Naive thymus-derived CD4-positive, alpha-beta T cell (primary cell): ENCODE measurements at regions of chr9 and their contacts with region 1.

Region 1: GRCh38 chr9:122350638-122351355 is 20.0 kb upstream of the PTGS1 start:
- DNase-seq: peak; percentile 46 to 84 (median 66)
- ATAC-seq: peak; percentile 88
- H3K4me3 ChIP-seq: no peak overlapping the region
- H3K4me3 Mint-ChIP-seq: peak overlapping the region in 1 of 10 donors; percentile 13
- H3K27ac ChIP-seq: no peak overlapping the region
- H3K27ac Mint-ChIP-seq: no peak overlapping the region
- H3K4me1 ChIP-seq: no peaks in the 10 kb centered on the region
- H3K4me1 Mint-ChIP-seq: peaks cover 7 to 19% (median 14%) of the 10 kb centered on the region in 7 donors
- H3K27me3 ChIP-seq: peaks cover 0 to 3% of the 10 kb centered on the region in 2 donors
- H3K27me3 Mint-ChIP-seq: peaks cover 28 to 39% (median 34%) of the 10 kb centered on the region in 5 donors

Region 2: GRCh38 chr9:122099271-122099869 is 251.4 kb before region 1 on chr9:
- CTCF ChIA-PET with region 1: interaction called, 58 read pairs
- POLR2A ChIA-PET with region 1: interaction called, 3 read pairs
- intact Hi-C with region 1: loop called (anchors 1 kb)
- DNase-seq: peak; percentile 54 to 79 (median 71)
- ATAC-seq: peak; percentile 86
- H3K4me3 ChIP-seq: no peak overlapping the region
- H3K4me3 Mint-ChIP-seq: peak overlapping the region in 7 of 10 donors; percentile 10 to 80 (median 48)
- H3K27ac ChIP-seq: no peak overlapping the region
- H3K27ac Mint-ChIP-seq: no peak overlapping the region
- H3K4me1 ChIP-seq: peaks cover 0 to 11% of the 10 kb centered on the region in 2 donors
- H3K4me1 Mint-ChIP-seq: peaks cover 7 to 19% (median 11%) of the 10 kb centered on the region in 7 donors
- H3K27me3 ChIP-seq: no peaks in the 10 kb centered on the region
- H3K27me3 Mint-ChIP-seq: peaks cover 0 to 29% (median 6%) of the 10 kb centered on the region in 5 donors

Region 3: GRCh38 chr9:122151267-122151828 is 199.4 kb before region 1 on chr9:
- CTCF ChIA-PET with region 1: no interaction called
- POLR2A ChIA-PET with region 1: no interaction called
- intact Hi-C with region 1: no loop called
- DNase-seq: no peak
- ATAC-seq: no peak
- H3K4me3 ChIP-seq: no peak overlapping the region
- H3K4me3 Mint-ChIP-seq: no peak overlapping the region
- H3K27ac ChIP-seq: no peak overlapping the region
- H3K27ac Mint-ChIP-seq: no peak overlapping the region
- H3K4me1 ChIP-seq: no peaks in the 10 kb centered on the region
- H3K4me1 Mint-ChIP-seq: peaks cover 4 to 31% (median 21%) of the 10 kb centered on the region in 7 donors
- H3K27me3 ChIP-seq: no peaks in the 10 kb centered on the region
- H3K27me3 Mint-ChIP-seq: no peaks in the 10 kb centered on the region

Region 4: DNA sequence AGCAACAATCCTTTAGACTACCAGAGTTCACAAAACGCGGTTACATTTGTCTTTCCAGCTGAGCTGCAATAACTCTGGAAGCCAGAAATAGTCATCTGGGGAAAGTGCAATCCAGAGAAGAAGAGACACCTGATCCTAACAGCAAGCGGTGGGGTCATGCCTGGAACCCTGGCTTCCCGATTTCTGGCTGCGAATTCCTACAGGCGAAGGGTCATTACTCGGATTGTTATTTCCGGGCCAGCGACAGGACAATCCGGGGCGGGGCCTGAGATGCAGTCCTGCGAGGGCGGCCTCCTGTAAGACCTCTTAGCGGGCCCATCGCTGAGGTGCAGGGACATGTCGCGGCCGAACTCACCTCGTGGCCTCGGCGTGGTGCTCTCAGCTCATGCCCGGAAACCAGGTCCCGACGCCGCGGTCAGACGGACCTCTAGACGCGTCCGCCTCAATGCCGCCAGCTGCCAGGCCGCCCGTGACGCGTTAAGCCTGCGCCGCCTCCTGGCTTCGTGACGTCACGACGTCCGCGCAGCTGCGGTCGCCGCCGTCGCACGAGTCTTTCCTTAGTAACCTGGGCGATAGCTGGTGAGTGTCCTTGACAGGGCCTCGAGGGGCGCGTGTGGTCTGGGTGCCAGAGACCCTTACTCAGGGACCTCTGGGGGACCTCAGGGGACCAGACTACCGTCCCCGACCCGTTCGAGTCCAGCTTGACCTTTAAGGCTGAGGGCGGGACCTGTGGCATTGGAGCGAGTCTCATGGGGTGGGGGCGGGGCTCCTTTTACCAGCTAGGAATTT is 86.2 kb before region 1 on chr9 and contains the starts of genes MRRF and RBM18:
- CTCF ChIA-PET with region 1: no interaction called
- POLR2A ChIA-PET with region 1: no interaction called
- intact Hi-C with region 1: loop called in 1 of 2 experiments (anchors 1 kb)
- DNase-seq: peak; percentile 80 to 93 (median 88)
- ATAC-seq: peak; percentile 92
- H3K4me3 ChIP-seq: peak within 1 kb of the TSS; percentile 93
- H3K4me3 Mint-ChIP-seq: peak within 1 kb of the TSS; percentile 88 to 100 (median 98)
- H3K27ac ChIP-seq: peak within 1 kb of the TSS; percentile 94
- H3K27ac Mint-ChIP-seq: peak within 1 kb of the TSS; percentile 76 to 100 (median 99)
- H3K4me1 ChIP-seq: peaks cover 18 to 25% of the 10 kb centered on the region in 2 donors
- H3K4me1 Mint-ChIP-seq: peaks cover 40 to 71% (median 61%) of the 10 kb centered on the region in 7 donors
- H3K27me3 ChIP-seq: no peaks in the 10 kb centered on the region
- H3K27me3 Mint-ChIP-seq: peaks cover 0 to 2% (median 0%) of the 10 kb centered on the region in 5 donors
- total RNA-seq, gene MRRF: 28.1 to 35.8 (median 33.3) TPM
- total RNA-seq, gene RBM18: 14.2 to 22.9 (median 15.8) TPM

Region 5: DNA sequence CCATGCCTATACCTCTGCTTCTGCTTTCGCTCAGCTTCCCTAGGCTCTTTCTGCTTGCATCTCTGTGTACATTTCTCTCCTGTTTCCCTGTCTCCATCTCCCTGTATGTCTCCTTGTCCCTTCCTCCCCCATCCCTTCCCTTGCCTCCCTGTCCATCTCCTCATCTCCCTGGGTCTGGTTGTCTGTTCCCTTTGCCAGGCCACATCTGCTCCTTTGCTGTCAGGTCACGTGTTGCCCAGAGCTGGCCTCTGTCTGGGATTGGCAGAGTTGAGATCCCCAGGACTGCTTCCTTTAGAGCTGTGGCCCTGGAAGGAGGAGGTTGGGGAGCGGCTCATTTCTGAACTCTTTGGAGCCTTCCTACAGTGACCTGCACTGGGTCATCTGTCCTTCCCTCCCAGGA is 11.8 kb before region 1 on chr9:
- CTCF ChIA-PET with region 1: interaction called, 11 read pairs
- POLR2A ChIA-PET with region 1: no interaction called
- intact Hi-C with region 1: no loop called
- DNase-seq: no peak
- ATAC-seq: no peak
- H3K4me3 ChIP-seq: no peak overlapping the region
- H3K4me3 Mint-ChIP-seq: no peak overlapping the region
- H3K27ac ChIP-seq: no peak overlapping the region
- H3K27ac Mint-ChIP-seq: no peak overlapping the region
- H3K4me1 ChIP-seq: no peaks in the 10 kb centered on the region
- H3K4me1 Mint-ChIP-seq: no peaks in the 10 kb centered on the region
- H3K27me3 ChIP-seq: no peaks in the 10 kb centered on the region
- H3K27me3 Mint-ChIP-seq: peaks cover 0 to 12% (median 4%) of the 10 kb centered on the region in 5 donors

Region 6: GRCh38 chr9:122453677-122454135 is 102.9 kb after region 1 on chr9:
- CTCF ChIA-PET with region 1: no interaction called
- POLR2A ChIA-PET with region 1: no interaction called
- intact Hi-C with region 1: loop called in 1 of 2 experiments (anchors 10 kb)
- DNase-seq: no peak
- ATAC-seq: no peak
- H3K4me3 ChIP-seq: no peak overlapping the region
- H3K4me3 Mint-ChIP-seq: no peak overlapping the region
- H3K27ac ChIP-seq: no peak overlapping the region
- H3K27ac Mint-ChIP-seq: no peak overlapping the region
- H3K4me1 ChIP-seq: no peaks in the 10 kb centered on the region
- H3K4me1 Mint-ChIP-seq: no peaks in the 10 kb centered on the region
- H3K27me3 ChIP-seq: no peaks in the 10 kb centered on the region
- H3K27me3 Mint-ChIP-seq: peaks cover 0 to 26% (median 18%) of the 10 kb centered on the region in 5 donors

Region 7: DNA sequence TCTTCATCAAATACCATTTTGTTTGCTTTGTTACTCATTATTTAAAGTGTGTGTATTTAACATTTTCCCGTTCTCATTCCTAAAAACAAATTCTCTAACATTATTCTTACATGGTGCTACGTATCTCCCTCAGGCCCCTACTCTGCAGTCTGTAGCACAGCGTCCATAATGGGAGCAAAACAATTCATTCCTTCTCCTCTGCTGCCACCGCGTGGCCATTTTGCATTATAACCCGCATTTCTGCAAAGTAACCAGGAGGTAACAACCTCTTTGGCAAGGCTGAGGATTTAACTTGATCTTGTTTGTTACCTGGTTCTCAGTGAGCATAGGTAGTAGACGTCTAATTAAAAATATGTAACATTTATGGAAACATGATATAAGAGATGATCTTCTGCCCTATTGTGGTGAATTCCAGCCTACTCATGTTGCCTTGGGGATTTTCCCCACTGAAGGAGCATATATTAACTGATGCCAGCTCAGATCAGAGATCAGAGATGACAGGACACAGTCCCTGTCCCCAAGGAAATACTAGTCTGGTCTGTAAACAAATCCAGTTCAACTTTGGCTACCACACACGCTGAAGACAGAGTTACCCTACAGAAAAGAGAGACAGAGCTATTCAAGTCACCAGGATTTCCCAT is 459.6 kb after region 1 on chr9:
- CTCF ChIA-PET with region 1: interaction called, 9 read pairs
- POLR2A ChIA-PET with region 1: no interaction called
- intact Hi-C with region 1: loop called (anchors 1 to 2 kb)
- DNase-seq: peak; percentile 52 to 79 (median 72)
- ATAC-seq: peak; percentile 95
- H3K4me3 ChIP-seq: no peak overlapping the region
- H3K4me3 Mint-ChIP-seq: no peak overlapping the region
- H3K27ac ChIP-seq: no peak overlapping the region
- H3K27ac Mint-ChIP-seq: no peak overlapping the region
- H3K4me1 ChIP-seq: peaks cover 0 to under 1% of the 10 kb centered on the region in 2 donors
- H3K4me1 Mint-ChIP-seq: peaks cover 9 to 24% (median 16%) of the 10 kb centered on the region in 7 donors
- H3K27me3 ChIP-seq: no peaks in the 10 kb centered on the region
- H3K27me3 Mint-ChIP-seq: no peaks in the 10 kb centered on the region